Gastrocnemius medialis (tissue), 4 donors: ENCODE measurements at regions of chr20 and their contacts with region 1.

Region 1: GRCh38 chr20:59525500-59526241 is 78.7 kb upstream of the PHACTR3 start:
- DNase-seq: no peak
- ATAC-seq: no peak
- H3K4me3 ChIP-seq: no peak overlapping the region
- H3K27ac ChIP-seq: no peak overlapping the region
- H3K4me1 ChIP-seq: no peaks in the 10 kb centered on the region
- H3K27me3 ChIP-seq: peaks cover 15 to 29% (median 27%) of the 10 kb centered on the region in 3 donors
- CTCF ChIP-seq: peak; percentile 5 to 64 (median 33)
- POLR2A ChIP-seq: no peak

Region 2: DNA sequence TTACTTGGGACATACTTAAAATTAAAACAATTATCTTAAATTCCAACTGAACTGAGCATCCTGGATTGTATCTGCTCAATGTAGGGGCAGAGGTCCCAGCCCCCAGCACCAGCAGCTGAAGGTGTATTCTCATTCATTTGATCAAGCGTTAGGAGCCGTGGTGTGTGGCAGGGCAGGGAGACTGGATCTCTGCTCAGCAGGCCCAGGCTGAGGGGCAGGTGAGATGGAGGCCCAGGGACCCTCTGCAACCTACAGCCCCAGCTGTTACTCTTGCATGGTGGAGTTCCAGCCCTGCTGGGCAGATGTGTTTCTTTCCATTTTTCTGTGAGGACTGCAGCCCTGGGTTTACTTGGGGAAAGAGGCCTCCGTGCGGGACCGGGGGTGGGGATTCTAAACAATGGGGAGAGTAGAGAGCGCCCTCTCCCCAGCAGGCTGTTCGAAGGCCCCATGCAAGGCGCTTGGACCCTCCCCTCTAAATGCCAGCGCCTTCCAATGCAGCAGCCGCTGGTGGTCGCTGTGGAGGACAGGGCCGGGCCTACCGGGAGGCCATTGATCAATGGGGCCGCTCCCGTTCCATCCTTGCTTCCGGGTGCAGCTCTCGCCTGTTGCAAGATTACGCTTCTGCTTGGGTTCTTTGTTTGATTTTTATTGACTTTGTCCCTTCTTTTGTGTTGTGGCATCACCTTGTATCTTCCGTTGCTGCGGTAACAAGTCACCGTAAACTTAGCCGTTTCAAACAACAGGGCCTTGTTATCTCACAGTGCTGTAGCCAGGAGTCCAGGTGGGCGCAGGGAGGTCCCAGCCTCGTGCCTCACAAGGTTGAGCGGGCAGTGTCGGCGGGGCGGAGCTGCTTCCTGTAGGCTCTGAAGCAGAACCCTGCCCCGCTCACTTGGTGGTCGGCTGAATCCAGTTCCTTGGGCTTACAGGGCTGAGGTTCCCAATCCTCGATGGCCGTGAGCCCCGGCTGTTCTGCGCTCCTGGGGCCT is 56.1 kb before region 1 on chr20:
- in situ Hi-C with region 1: loop called in 1 of 4 experiments (anchors 10 kb)
- intact Hi-C with region 1: no loop called
- DNase-seq: no peak
- ATAC-seq: no peak
- H3K4me3 ChIP-seq: no peak overlapping the region
- H3K27ac ChIP-seq: no peak overlapping the region
- H3K4me1 ChIP-seq: no peaks in the 10 kb centered on the region
- H3K27me3 ChIP-seq: no peaks in the 10 kb centered on the region
- CTCF ChIP-seq: no peak
- POLR2A ChIP-seq: no peak